Mammary epithelial cell (primary cell): ENCODE measurements at regions of chr5 and their contacts with region 1.

Region 1: GRCh38 chr5:40688127-40688761 is 8.5 kb downstream of the PTGER4 start:
- DNase-seq: peak; percentile 67
- H3K4me3 ChIP-seq: no peak overlapping the region
- H3K27ac ChIP-seq: peak overlapping the region; percentile 68
- H3K4me1 ChIP-seq: peaks cover 32% of the 10 kb centered on the region
- H3K27me3 ChIP-seq: no peaks in the 10 kb centered on the region
- CTCF ChIP-seq: peak; percentile 69 to 83

Region 2: GRCh38 chr5:39714036-39714698 is 974.1 kb before region 1 on chr5:
- CTCF ChIA-PET with region 1: no interaction called
- dilution Hi-C with region 1: no loop called
- in situ Hi-C with region 1: loop called in 1 of 2 experiments (anchors 10 kb)
- intact Hi-C with region 1: loop called (anchors 1 kb)
- DNase-seq: peak; percentile 64
- H3K4me3 ChIP-seq: no peak overlapping the region
- H3K27ac ChIP-seq: no peak overlapping the region
- H3K4me1 ChIP-seq: no peaks in the 10 kb centered on the region
- H3K27me3 ChIP-seq: peaks cover under 1% of the 10 kb centered on the region
- CTCF ChIP-seq: peak; percentile 76 to 83

Region 3: DNA sequence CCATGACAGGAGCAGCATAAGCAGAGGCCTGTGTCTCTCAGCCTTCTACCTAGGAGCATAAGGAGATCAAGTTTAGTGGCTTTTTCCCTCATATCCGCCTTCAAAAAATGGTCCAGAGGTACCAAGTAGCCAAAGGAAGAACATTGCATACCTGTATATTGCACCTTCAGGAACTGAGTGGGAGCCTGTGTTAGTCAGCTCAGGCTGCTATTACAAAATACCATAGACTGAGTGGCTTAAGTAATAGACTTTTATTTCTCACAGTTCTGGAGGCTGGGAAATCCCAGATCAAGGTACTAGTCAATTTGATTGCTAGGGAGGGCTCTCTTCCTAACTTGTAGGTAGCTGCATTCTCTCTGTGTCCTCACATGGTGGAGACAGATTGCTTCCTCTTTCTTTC is 605.9 kb before region 1 on chr5:
- CTCF ChIA-PET with region 1: interaction called, 13 read pairs
- dilution Hi-C with region 1: no loop called
- in situ Hi-C with region 1: no loop called
- intact Hi-C with region 1: no loop called
- DNase-seq: peak; percentile 48
- H3K4me3 ChIP-seq: no peak overlapping the region
- H3K27ac ChIP-seq: no peak overlapping the region
- H3K4me1 ChIP-seq: no peaks in the 10 kb centered on the region
- H3K27me3 ChIP-seq: no peaks in the 10 kb centered on the region
- CTCF ChIP-seq: no peak

Region 4: GRCh38 chr5:40386289-40386688 is 302.0 kb before region 1 on chr5:
- CTCF ChIA-PET with region 1: interaction called, 17 read pairs
- dilution Hi-C with region 1: no loop called
- in situ Hi-C with region 1: no loop called
- intact Hi-C with region 1: no loop called
- DNase-seq: peak; percentile 26
- H3K4me3 ChIP-seq: no peak overlapping the region
- H3K27ac ChIP-seq: no peak overlapping the region
- H3K4me1 ChIP-seq: peaks cover 49% of the 10 kb centered on the region
- H3K27me3 ChIP-seq: no peaks in the 10 kb centered on the region
- CTCF ChIP-seq: no peak

Region 5: GRCh38 chr5:40502736-40503135 is 185.5 kb before region 1 on chr5:
- CTCF ChIA-PET with region 1: no interaction called
- dilution Hi-C with region 1: no loop called
- in situ Hi-C with region 1: loop called (anchors 10 kb)
- intact Hi-C with region 1: loop called (anchors 1 kb)
- DNase-seq: no peak
- H3K4me3 ChIP-seq: no peak overlapping the region
- H3K27ac ChIP-seq: no peak overlapping the region
- H3K4me1 ChIP-seq: no peaks in the 10 kb centered on the region
- H3K27me3 ChIP-seq: no peaks in the 10 kb centered on the region
- CTCF ChIP-seq: no peak